A549 (cell line): ENCODE measurements at regions of chr1 and their contacts with region 1.

Region 1: GRCh38 chr1:33641104-33641830 is 168.8 kb downstream of the ZSCAN20 start:
- DNase-seq: peak; percentile 22 to 26
- ATAC-seq: peak; percentile 67 to 69; a peak in 5 of 6 replicates
- H3K4me3 ChIP-seq: no peak overlapping the region
- H3K27ac ChIP-seq: no peak overlapping the region
- H3K4me1 ChIP-seq: no peaks in the 10 kb centered on the region
- CTCF ChIP-seq: peak; percentile 28; the same call in 1 of the 3 replicates
- EP300 ChIP-seq: no peak
- POLR2A ChIP-seq: no peak
- RAD21 ChIP-seq: peak in 1 of 2 experiments; percentile 17; a peak in 1 of 5 replicates

Region 2: GRCh38 chr1:34162852-34163766 is 521.8 kb after region 1 on chr1:
- CTCF ChIA-PET with region 1: interaction called, 12 read pairs
- POLR2A ChIA-PET with region 1: no interaction called
- DNase-seq: peak; percentile 51 to 74
- ATAC-seq: peak; percentile 93 to 98
- H3K4me3 ChIP-seq: peak overlapping the region; percentile 41
- H3K27ac ChIP-seq: no peak overlapping the region
- H3K4me1 ChIP-seq: peaks cover 13% of the 10 kb centered on the region; the same call in 2 of the 3 replicates
- CTCF ChIP-seq: peak; percentile 46; the same call in 2 of the 3 replicates
- EP300 ChIP-seq: no peak
- POLR2A ChIP-seq: no peak
- RAD21 ChIP-seq: peak; percentile 57 to 72